ENCODE measurements at regions of chr2 and their contacts with region 1.

Region 1: DNA sequence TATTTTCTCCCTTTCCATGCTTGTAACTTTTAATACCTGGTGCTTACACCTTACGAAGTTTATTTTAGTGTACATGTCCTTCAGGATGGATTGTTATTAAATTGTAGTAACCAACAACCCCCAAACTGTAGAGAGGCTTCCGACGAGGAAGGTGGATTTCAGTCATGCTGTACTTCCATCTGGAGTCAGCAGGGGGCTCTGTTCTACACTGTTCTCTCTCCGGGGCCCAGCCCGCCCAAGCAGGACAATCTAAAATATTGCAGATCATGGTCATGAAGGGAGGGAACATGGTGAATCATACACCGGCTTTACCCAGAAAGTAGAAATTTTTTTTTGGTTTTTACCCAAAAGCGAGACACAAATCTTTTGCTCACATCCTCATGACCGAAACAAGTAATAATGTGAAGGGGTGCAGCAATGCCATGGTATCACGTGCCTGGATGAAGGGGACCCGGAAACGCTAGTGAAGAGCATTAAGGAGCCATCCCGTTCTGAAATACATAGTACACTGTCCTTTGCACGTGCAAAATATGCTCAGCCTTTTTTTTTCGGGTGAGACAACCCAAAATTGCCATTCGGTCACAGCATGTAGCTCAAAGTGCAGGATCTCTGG is 884.8 kb downstream of the EPHA4 start:
- DNase-seq: peak; percentile 61
- H3K4me3 ChIP-seq: no peak overlapping the region
- H3K27ac ChIP-seq: no peak overlapping the region
- H3K4me1 ChIP-seq: no peaks in the 10 kb centered on the region
- H3K27me3 ChIP-seq: no peaks in the 10 kb centered on the region
- CTCF ChIP-seq: peak; percentile 66 to 85 (median 79)
- POLR2A ChIP-seq: no peak

Region 2: GRCh38 chr2:219736209-219736608 is 951.1 kb before region 1 on chr2:
- intact Hi-C with region 1: loop called (anchors 10 kb)
- DNase-seq: peak; percentile 29
- H3K4me3 ChIP-seq: no peak overlapping the region
- H3K27ac ChIP-seq: no peak overlapping the region
- H3K4me1 ChIP-seq: no peaks in the 10 kb centered on the region
- H3K27me3 ChIP-seq: peaks cover 3% of the 10 kb centered on the region
- CTCF ChIP-seq: peak; percentile 25 to 66 (median 52)
- POLR2A ChIP-seq: no peak

Region 3: DNA sequence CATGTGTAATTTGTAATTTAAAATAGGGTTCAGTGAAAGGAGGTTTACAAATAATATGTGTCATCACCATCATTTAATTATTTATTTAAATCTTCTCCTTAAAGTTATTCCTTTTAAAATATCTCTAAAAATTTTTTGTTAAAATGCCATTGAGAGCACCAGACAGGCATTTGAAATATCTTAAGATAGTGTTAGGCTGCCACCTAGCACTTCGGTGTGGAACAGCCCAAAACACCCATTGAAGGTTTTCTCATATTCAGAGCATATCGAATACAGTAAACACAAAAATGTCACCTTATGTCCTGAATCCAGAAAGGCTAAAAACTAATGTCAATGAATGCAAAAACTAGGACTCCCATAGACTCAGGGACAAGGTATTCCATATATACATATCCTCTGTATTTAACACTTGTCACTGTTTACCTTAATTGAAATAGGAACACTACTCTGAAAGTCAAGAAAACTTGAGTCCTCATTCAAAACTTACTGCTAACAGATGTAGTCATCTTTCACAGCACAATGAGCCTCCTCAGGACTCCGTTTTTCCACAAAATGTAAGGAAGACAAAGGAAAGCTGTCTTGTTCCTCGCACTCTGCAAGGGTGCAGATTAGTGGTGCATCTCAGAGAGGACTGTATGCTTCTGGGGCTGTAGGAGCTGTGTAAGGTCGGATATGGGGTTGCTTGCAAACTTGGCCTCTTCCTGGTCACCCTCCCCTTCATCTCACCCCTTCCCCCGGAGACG is 1281.9 kb after region 1 on chr2:
- intact Hi-C with region 1: loop called (anchors 5 kb)
- DNase-seq: no peak
- H3K4me3 ChIP-seq: no peak overlapping the region
- H3K27ac ChIP-seq: no peak overlapping the region
- H3K4me1 ChIP-seq: no peaks in the 10 kb centered on the region
- H3K27me3 ChIP-seq: peaks cover 3% of the 10 kb centered on the region
- CTCF ChIP-seq: peak in 3 of 4 experiments; percentile 35 to 52 (median 51)
- POLR2A ChIP-seq: no peak

Measured in prostate gland (tissue), 2 donors.